ENCODE measurements at regions of chr6 and their contacts with region 1.

Region 1: GRCh38 chr6:70080443-70081070 is 214.2 kb downstream of the COL19A1 start:
- DNase-seq: no peak
- H3K4me3 ChIP-seq: no peak overlapping the region
- H3K4me3 Mint-ChIP-seq: no peak overlapping the region
- H3K27ac ChIP-seq: no peak overlapping the region
- H3K27ac Mint-ChIP-seq: no peak overlapping the region
- H3K4me1 ChIP-seq: no peaks in the 10 kb centered on the region
- H3K4me1 Mint-ChIP-seq: no peaks in the 10 kb centered on the region
- H3K27me3 ChIP-seq: no peaks in the 10 kb centered on the region
- H3K27me3 Mint-ChIP-seq: peaks cover 0 to 2% of the 10 kb centered on the region in 2 donors

Region 2: DNA sequence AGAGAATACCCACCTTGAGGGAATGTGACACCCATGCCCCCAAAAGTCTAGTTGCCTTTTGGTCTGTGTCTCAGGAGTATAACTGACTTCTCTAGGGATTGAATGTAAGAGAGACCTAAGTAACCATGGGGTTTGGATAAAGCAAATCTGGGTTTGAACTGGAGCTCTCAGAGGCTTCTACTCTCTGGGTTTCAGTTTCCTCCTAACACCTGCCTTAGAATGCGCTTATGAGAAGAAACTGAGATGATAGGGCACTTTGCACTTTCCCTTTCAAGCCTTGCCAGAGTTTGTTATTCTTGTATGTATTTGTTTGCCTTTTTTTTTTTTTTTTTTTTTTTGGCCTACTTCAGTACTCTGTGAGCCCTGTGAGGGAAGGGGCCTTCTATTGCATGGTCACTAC is 505.6 kb after region 1 on chr6:
- CTCF ChIA-PET with region 1: no interaction called
- POLR2A ChIA-PET with region 1: no interaction called
- intact Hi-C with region 1: loop called (anchors 10 kb)
- DNase-seq: no peak
- H3K4me3 ChIP-seq: no peak overlapping the region
- H3K4me3 Mint-ChIP-seq: no peak overlapping the region
- H3K27ac ChIP-seq: no peak overlapping the region
- H3K27ac Mint-ChIP-seq: peak overlapping the region in 1 of 7 donors; percentile 25
- H3K4me1 ChIP-seq: no peaks in the 10 kb centered on the region
- H3K4me1 Mint-ChIP-seq: peaks cover 0 to 8% (median 2%) of the 10 kb centered on the region in 4 donors
- H3K27me3 ChIP-seq: no peaks in the 10 kb centered on the region
- H3K27me3 Mint-ChIP-seq: no peaks in the 10 kb centered on the region

Measured in CD4-positive, alpha-beta memory T cell (primary cell).